H1 (cell line): ENCODE measurements at regions of chr12 and their contacts with region 1.

Region 1: DNA sequence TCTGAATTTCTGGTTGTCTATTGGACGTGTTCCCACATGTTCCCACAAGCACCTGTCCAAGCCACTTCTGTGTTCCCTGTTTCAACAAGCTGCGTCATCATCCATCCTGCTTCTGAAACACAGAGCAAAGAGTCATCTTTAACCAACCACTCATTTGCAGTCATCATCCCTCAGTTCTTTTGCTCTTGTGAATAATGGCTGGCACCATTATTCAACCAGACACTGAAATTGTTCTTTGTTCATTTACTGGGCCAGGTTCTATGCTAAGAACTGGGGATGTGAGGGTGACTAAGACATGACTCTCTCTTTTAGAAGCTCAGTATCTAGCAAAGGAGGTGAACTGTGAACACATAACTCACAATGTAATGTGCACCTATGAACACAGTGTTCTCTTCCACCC is 40.7 kb upstream of the ANO4 start:
- DNase-seq: no peak
- H3K4me3 ChIP-seq: no peak overlapping the region
- H3K27ac ChIP-seq: no peak overlapping the region
- H3K4me1 ChIP-seq: no peaks in the 10 kb centered on the region
- H3K27me3 ChIP-seq: no peaks in the 10 kb centered on the region
- CTCF ChIP-seq: no peak
- EP300 ChIP-seq: no peak
- POLR2A ChIP-seq: no peak
- RAD21 ChIP-seq: no peak

Region 2: GRCh38 chr12:100733817-100734593 is 19.8 kb before region 1 on chr12:
- CTCF ChIA-PET with region 1: interaction called, 10 read pairs
- POLR2A ChIA-PET with region 1: interaction called, 3 read pairs
- DNase-seq: no peak
- H3K4me3 ChIP-seq: no peak overlapping the region
- H3K27ac ChIP-seq: no peak overlapping the region
- H3K4me1 ChIP-seq: no peaks in the 10 kb centered on the region
- H3K27me3 ChIP-seq: no peaks in the 10 kb centered on the region
- CTCF ChIP-seq: peak in 2 of 3 experiments; percentile 46 to 50; a peak in 2 of 4 replicates
- EP300 ChIP-seq: no peak
- POLR2A ChIP-seq: no peak
- RAD21 ChIP-seq: peak; percentile 45 to 48

Region 3: GRCh38 chr12:100741084-100741711 is 12.6 kb before region 1 on chr12:
- CTCF ChIA-PET with region 1: interaction called, 15 read pairs
- POLR2A ChIA-PET with region 1: interaction called, 3 read pairs
- DNase-seq: no peak
- H3K4me3 ChIP-seq: no peak overlapping the region
- H3K27ac ChIP-seq: no peak overlapping the region
- H3K4me1 ChIP-seq: no peaks in the 10 kb centered on the region
- H3K27me3 ChIP-seq: no peaks in the 10 kb centered on the region
- CTCF ChIP-seq: peak in 2 of 3 experiments; percentile 42 to 71; a peak in 2 of 4 replicates
- EP300 ChIP-seq: no peak
- POLR2A ChIP-seq: no peak
- RAD21 ChIP-seq: peak; percentile 56 to 59